AG04449 (cell line): ENCODE measurements at regions of chr20 and their contacts with region 1.

Region 1: DNA sequence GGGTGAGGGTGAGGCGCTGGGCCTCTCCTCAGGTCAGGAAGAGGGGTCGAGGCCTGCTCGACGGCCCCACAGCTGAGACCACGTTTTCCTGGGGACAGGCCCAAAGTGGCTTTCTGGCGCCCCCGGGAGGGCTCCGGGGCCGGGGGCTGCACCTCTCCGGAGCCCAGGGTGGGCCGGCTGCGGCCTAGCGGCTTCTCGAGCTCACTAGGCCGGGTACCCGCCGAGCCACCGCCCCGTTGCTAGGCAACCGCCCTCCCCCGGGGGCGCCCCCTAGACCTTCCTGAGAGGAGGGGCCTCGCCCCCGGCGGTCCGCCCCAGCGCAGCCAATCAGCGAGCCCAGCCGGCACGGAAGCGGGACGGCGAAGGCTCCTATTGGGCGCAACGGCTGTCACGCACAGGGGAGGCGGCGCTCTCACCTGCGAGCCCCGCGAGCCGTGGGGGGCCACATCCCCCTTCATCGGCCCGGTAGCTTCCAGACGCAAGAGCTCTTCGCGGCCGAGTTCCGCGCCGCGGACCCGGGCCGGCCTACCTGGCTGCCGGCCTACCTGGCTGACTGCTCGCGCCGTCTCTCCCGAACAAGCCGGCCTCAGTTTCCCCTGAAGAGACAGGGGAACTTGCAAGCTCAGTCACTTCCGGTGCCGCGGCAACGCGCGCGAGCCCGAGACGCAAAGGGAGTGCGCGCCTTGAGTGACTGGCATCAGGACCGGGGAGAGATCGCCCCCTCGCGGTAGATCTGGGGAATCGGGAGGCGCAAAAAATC is 831 bp upstream of the BCL2L1 start:
- DNase-seq: peak; percentile 91
- H3K4me3 ChIP-seq: peak overlapping the region; percentile 76
- CTCF ChIP-seq: peak; percentile 88

Region 2: GRCh38 chr20:31572701-31573554 is 150.6 kb before region 1 on chr20:
- CTCF ChIA-PET with region 1: interaction called, 18 read pairs
- POLR2A ChIA-PET with region 1: interaction called, 3 read pairs
- DNase-seq: peak; percentile 89
- H3K4me3 ChIP-seq: peak overlapping the region; percentile 62
- CTCF ChIP-seq: no peak

Region 3: GRCh38 chr20:31638317-31638716 is 85.2 kb before region 1 on chr20:
- CTCF ChIA-PET with region 1: interaction called, 238 read pairs
- POLR2A ChIA-PET with region 1: interaction called, 6 read pairs
- DNase-seq: no peak
- H3K4me3 ChIP-seq: no peak overlapping the region
- CTCF ChIP-seq: no peak

Region 4: DNA sequence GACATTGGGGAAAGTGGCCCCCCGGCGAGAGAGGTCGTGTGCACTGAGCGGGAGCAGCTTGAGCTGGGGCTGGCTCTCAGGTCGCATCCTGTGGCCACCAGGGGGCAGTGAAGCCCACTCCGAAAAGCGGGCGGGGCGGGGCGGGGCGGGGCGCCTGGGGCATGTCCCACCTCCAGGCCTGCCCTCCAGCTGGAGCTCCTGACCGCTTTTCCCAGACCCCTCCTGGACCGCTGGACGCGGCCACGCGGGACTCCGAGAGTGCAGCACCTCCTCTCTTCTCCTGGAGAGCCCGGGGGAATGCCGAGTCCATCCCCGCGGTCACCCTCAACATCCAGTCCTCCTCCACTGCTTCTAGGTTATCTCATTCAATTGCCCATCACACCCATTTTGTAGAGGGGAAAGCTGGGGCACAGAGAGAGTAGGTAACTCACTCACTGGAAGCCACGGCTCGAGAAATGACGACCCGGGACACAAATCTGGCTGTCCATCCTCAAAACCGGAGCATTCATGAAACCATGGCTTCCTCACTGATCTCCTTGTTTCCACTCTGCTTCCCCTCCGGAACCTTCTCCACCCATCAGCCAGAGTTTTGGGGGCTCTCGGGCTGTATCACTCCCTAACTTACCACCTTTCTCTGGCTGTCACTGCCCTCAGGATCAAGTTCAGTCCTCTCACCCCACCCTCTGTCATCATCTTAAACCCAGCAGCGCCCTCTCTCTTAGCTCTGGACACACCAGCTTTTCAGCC is 61.7 kb before region 1 on chr20:
- CTCF ChIA-PET with region 1: interaction called, 534 read pairs
- POLR2A ChIA-PET with region 1: interaction called, 42 read pairs
- DNase-seq: no peak
- H3K4me3 ChIP-seq: peak overlapping the region; percentile 48
- CTCF ChIP-seq: peak; percentile 77

Region 5: GRCh38 chr20:31691646-31692275 is 31.7 kb before region 1 on chr20:
- CTCF ChIA-PET with region 1: interaction called, 79 read pairs
- POLR2A ChIA-PET with region 1: no interaction called
- DNase-seq: peak; percentile 41
- H3K4me3 ChIP-seq: no peak overlapping the region
- CTCF ChIP-seq: no peak

Region 6: DNA sequence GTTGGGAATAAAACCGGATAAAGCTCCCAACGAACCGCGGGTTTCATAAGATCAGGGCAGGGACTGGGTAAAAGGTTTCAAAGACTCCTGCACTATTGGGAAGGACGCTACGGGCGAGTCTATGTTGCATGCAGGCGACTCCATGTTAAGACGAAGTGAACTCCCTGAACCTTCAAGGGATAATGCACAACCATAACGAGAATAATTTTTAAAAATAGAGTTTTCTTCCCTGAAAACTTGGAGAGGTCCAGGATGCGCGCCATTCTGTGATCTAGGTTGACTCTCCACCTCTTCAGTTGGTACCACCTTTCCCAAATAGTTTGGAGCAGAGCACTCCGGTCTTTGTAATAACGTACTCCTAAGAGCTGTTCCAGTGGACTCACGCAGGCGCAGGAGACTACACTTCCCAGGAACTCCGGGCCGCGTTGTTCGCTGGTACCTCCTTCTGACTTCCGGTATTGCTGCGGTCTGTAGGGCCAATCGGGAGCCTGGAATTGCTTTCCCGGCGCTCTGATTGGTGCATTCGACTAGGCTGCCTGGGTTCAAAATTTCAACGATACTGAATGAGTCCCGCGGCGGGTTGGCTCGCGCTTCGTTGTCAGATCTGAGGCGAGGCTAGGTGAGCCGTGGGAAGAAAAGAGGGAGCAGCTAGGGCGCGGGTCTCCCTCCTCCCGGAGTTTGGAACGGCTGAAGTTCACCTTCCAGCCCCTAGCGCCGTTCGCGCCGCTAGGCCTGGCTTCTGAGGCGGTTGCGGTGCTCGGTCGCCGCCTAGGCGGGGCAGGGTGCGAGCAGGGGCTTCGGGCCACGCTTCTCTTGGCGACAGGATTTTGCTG is 15.4 kb after region 1 on chr20 and contains the start of gene TPX2:
- CTCF ChIA-PET with region 1: interaction called, 46 read pairs
- POLR2A ChIA-PET with region 1: interaction called, 3 read pairs
- DNase-seq: peak; percentile 83
- H3K4me3 ChIP-seq: peak within 1 kb of the TSS; percentile 97
- CTCF ChIP-seq: peak; percentile 12

Region 7: DNA sequence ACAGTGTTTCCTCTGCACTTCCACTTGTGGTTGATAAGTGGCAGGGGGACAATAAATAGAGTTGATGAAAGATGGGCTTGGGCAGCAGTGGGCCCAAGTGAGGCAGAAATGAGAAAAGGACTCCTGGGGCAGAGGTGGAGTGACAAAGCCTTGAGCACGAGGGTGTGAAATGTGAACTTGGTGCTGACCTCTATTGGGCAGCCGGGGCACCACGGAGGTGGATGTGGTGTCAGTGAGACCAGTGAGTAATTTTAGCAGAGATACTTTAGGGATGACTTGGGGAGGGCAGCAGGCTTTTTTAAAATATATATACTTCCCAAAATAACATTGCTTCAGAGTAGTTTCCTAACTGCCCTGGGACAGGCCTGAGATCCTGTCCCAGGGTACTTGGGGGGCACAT is 65.1 kb after region 1 on chr20:
- CTCF ChIA-PET with region 1: interaction called, 10 read pairs
- POLR2A ChIA-PET with region 1: no interaction called
- DNase-seq: no peak
- H3K4me3 ChIP-seq: no peak overlapping the region
- CTCF ChIP-seq: no peak